ENCODE measurements at regions of chr17 and their contacts with region 1.

Region 1: GRCh38 chr17:58082870-58083490 is at the start of gene DYNLL2:
- DNase-seq: peak; percentile 77 to 93 (median 88)
- H3K4me3 ChIP-seq: peak within 1 kb of the TSS; percentile 47 to 99 (median 92)
- H3K27ac ChIP-seq: peak within 1 kb of the TSS; percentile 67 to 97 (median 94)
- H3K27me3 ChIP-seq: no peaks in the 10 kb centered on the region
- CTCF ChIP-seq: peak in 2 of 56 donors; percentile 11 to 18
- total RNA-seq, gene DYNLL2: 59.6 to 128 (median 88.8) TPM

Region 2: DNA sequence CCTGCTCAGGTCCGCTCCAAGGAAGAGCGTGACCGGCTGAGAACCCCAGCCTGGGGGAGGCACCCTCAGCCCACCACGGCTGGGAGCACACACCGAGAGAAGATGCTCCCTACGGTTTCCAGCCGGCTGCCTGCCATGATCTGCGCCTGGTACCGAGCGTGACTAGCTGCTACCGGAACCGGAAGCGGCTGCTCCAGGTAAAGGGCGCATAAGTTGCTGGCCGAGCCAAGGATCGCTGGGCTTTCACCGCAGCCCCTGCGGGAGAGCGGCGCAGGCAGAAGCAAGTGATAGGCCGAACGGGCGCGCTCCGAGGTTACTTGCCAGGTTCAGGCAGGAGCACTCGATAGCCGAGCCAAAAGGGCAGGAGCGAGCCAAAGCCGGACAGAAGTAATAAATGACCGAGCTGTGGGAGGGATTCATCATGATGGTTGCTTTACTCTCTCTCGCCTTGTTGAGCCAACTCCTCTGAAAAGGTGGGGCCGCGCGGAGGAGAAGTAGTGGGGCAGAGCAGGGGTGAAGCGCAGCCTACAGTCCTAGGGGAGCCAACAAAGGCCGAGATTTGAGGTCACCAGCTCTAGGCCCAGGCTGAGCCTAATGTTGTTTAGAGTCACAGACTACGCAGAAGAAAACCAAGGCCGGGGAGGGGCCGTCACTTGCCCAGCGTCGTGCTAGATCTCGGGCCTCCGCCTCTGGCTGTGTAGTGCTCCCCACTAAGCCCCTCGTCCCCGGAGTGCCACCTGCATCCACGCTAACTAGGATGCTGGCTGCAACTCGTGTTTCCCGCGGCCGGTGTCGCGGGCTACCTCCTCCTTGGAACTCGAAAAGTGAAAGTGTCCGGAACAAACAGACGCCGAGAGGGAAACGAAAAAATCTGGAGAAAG is 232.9 kb before region 1 on chr17 and contains the start of gene MRPS23:
- intact Hi-C with region 1: loop called in 1 of 2 experiments (anchors 5 kb)
- DNase-seq: peak; percentile 95 to 99 (median 98)
- H3K4me3 ChIP-seq: peak within 1 kb of the TSS; percentile 67 to 100 (median 94)
- H3K27ac ChIP-seq: peak within 1 kb of the TSS; percentile 53 to 97 (median 91)
- H3K27me3 ChIP-seq: no peaks in the 10 kb centered on the region
- CTCF ChIP-seq: peak in 37 of 56 donors; percentile 7 to 58 (median 36)
- total RNA-seq, gene MRPS23: 32.8 to 72.7 (median 51.3) TPM

Region 3: GRCh38 chr17:57868007-57868909 is 214.7 kb before region 1 on chr17:
- intact Hi-C with region 1: loop called in 1 of 2 experiments (anchors 10 kb)
- DNase-seq: peak in 2 of 10 donors; percentile 39 to 71
- H3K4me3 ChIP-seq: peak overlapping the region in 1 of 59 donors; percentile 2
- H3K27ac ChIP-seq: peak overlapping the region in 56 of 59 donors; percentile 10 to 84 (median 74)
- H3K27me3 ChIP-seq: no peaks in the 10 kb centered on the region
- CTCF ChIP-seq: peak in 33 of 56 donors; percentile 7 to 49 (median 29)

Region 4: DNA sequence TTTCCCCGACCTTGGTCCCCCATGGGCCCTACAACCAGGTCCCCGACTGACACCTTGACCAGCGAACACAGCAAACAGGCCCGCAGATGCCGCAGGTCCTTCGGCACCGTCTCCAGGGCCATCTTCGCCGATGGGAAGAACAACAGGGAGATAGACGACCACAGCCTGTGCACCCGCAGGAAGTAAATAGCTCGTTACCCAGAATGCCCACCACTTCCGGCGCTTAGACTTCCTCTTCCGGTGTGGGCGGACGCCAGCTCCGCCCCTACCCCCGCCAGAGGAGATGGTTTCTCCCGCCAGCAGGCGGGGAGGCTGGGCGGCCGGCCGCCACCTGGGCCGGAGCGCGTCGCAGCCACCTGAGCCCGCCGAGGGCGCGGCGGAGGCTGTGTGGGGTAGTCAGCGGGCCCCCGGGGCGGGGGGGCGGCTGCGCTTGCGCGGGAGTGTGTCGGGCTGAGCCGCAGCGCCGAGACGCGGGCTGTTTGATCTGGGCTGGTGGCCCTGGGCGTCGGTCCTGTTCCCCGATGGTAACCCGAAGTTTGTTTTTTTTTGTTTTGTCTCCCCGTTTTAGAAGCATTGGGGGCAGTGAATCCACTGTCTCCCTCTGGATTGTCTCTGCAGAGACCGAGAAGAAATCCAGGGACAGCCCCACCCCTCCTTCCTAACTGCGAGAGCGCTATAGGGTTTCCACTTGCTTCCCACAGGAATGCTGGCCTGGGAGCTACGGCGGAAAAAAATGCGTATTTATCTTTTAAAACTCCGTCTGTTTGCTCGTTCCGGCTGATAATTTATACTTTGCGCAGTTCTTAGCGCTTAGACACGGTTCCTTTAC is 269.2 kb after region 1 on chr17 and contains the start of gene SUPT4H1:
- intact Hi-C with region 1: loop called in 1 of 2 experiments (anchors 10 kb)
- DNase-seq: peak; percentile 71 to 92 (median 78)
- H3K4me3 ChIP-seq: peak within 1 kb of the TSS; percentile 71 to 100 (median 93)
- H3K27ac ChIP-seq: peak within 1 kb of the TSS; percentile 66 to 98 (median 93)
- H3K27me3 ChIP-seq: no peaks in the 10 kb centered on the region
- CTCF ChIP-seq: peak in 36 of 56 donors; percentile 13 to 57 (median 34)
- total RNA-seq, gene SUPT4H1: 34.1 to 73.3 (median 52.1) TPM

Measured in dorsolateral prefrontal cortex (tissue), 120 donors.